ENCODE measurements at regions of chr15 and their contacts with region 1.

Region 1: DNA sequence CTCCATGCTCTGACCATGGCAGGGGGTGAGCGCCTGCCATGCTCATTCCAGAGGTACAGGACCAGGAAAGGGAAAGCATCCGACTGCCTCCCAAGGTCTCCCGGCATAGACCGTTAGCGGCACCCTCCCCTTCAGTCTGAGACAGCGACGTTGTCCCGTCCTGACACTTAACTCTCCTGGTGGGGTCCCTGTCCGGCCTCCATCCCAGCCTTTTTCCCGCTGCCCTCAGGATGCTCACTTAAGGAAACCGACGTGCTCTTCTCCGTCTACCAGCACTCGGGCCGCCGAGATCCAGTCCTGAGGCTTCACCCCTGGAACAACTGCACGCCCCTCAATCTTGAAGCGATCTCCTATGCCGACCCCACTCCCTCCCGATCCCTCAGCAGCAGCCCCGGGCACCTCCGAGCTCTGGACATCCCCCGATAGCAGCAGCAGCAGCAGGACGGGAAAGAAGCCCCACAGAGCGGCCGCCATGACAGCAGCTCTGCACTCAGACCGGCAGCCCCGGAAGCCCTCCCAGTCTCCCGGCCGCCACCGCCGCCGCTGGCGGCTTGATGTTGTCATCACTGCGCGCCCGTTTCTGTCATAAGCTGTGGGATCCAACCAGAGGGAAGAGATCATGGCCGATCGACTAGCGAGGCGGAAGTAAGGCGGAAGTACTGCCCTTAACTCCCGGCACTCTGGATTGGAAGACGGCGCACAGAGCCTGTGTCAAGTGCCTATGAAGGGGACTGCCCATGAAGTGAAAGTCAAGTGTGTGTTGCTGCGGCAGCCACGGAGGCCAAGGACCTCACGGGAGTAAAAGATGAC is at the starts of genes EMC7 and PGBD4:
- DNase-seq: peak; percentile 99
- ATAC-seq: peak; percentile 100
- total RNA-seq, gene EMC7: 65.1 TPM
- total RNA-seq, gene PGBD4: 1.8 TPM

Region 2: GRCh38 chr15:33587773-33588172 is 513.8 kb before region 1 on chr15:
- intact Hi-C with region 1: no loop called
- DNase-seq: no peak
- ATAC-seq: no peak

Region 3: DNA sequence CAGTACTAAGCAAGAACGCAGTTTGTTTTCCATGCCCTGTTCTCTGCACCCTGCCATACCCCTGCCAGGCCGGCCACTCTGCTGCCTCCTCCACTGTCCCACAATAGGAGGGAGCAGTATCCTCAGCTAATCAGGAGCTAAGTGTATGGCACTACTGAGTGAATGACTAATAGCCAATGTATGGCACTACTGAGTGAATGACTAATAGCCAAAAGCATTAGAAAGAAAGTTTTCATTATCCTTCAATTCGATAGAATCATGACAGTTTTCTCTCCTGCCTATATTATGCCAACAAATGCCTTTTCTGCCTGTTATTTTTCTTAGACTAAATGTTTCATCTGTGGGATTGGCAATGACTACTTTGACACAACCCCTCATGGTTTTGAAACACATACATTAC is 240.8 kb before region 1 on chr15:
- intact Hi-C with region 1: no loop called
- DNase-seq: no peak
- ATAC-seq: no peak

Region 4: GRCh38 chr15:34154725-34155204 is 53.2 kb after region 1 on chr15:
- intact Hi-C with region 1: no loop called
- DNase-seq: no peak
- ATAC-seq: no peak

Region 5: GRCh38 chr15:34223904-34224596 is 122.5 kb after region 1 on chr15:
- intact Hi-C with region 1: loop called (anchors 1 kb)
- DNase-seq: no peak
- ATAC-seq: no peak

Region 6: GRCh38 chr15:34367101-34368081 is 265.8 kb after region 1 on chr15 and contains the start of gene LPCAT4:
- intact Hi-C with region 1: loop called (anchors 1 kb)
- DNase-seq: peak; percentile 96
- ATAC-seq: peak; percentile 96
- total RNA-seq, gene LPCAT4: 89.2 TPM

Region 7: GRCh38 chr15:34969340-34970097 is 867.9 kb after region 1 on chr15 and contains the start of gene AQR:
- intact Hi-C with region 1: loop called (anchors 5 kb)
- DNase-seq: peak; percentile 97
- ATAC-seq: peak; percentile 100
- total RNA-seq, gene AQR: 10.1 TPM